Activated CD4-positive, alpha-beta T cell treated with anti-CD3 and anti-CD28 coated beads for 36 hours (primary cell): ENCODE measurements at regions of chr11 and their contacts with region 1.

Region 1: DNA sequence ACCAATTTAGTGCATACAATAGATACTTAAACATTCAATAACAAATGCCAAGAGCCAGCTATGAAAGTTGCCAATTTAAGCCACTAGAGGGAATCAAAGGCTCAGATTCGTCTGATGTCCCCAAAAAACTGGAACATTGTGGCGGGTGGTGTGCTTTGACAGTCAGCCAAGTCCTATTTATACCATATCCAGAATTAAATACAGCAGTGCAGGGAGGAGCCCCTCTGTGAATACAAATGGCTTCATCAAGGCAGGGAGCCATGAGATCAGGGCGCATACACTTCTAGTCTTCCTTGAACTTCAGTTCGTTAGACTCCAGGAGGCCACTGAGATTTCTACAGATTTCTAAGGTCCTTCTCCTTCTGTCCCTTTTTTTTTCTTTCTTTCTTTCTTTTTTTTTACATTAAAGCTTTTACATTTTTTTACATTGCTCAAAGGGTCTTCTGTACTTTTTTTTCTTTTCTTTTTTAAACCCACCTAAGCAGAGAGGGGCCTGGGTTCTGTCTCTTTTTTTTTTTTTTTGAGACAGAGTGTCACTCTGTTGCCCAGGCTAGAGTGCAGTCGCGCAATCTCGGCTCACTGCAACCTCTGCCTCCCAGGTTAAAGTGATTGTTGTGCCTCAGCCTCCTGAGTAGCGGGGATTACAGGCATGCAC is 41.5 kb upstream of the HSPA8 start:
- DNase-seq: peak; percentile 46
- ATAC-seq: peak; percentile 77
- H3K4me3 Mint-ChIP-seq: no peak overlapping the region
- H3K27ac Mint-ChIP-seq: no peak overlapping the region
- H3K4me1 Mint-ChIP-seq: peaks cover 24% of the 10 kb centered on the region
- H3K27me3 Mint-ChIP-seq: no peaks in the 10 kb centered on the region

Region 2: GRCh38 chr11:123261345-123262106 is 158.1 kb after region 1 on chr11:
- CTCF ChIA-PET with region 1: interaction called, 24 read pairs
- POLR2A ChIA-PET with region 1: no interaction called
- intact Hi-C with region 1: no loop called
- DNase-seq: peak; percentile 90
- ATAC-seq: peak; percentile 90
- H3K4me3 Mint-ChIP-seq: peak overlapping the region; percentile 22
- H3K27ac Mint-ChIP-seq: no peak overlapping the region
- H3K4me1 Mint-ChIP-seq: peaks cover 6% of the 10 kb centered on the region
- H3K27me3 Mint-ChIP-seq: peaks cover 12% of the 10 kb centered on the region